ENCODE measurements at regions of chr2 and their contacts with region 1.

Region 1: GRCh38 chr2:11863513-11864328 is 117.3 kb downstream of the LPIN1 start:
- DNase-seq: peak; percentile 85 to 95 (median 94)
- H3K4me3 ChIP-seq: peak overlapping the region in 1 of 4 donors; percentile 19
- H3K27ac ChIP-seq: peak overlapping the region in 3 of 5 donors; percentile 30 to 58 (median 34)
- H3K4me1 ChIP-seq: peaks cover 11 to 14% of the 10 kb centered on the region in 2 donors
- H3K27me3 ChIP-seq: no peaks in the 10 kb centered on the region
- CTCF ChIP-seq: peak; percentile 95 to 99 (median 96)
- POLR2A ChIP-seq: no peak

Region 2: GRCh38 chr2:12176623-12177454 is 313.1 kb after region 1 on chr2:
- intact Hi-C with region 1: loop called in 1 of 2 experiments (anchors 10 kb)
- DNase-seq: peak; percentile 81 to 97 (median 95)
- H3K4me3 ChIP-seq: no peak overlapping the region
- H3K27ac ChIP-seq: peak overlapping the region; percentile 5 to 75 (median 49)
- H3K4me1 ChIP-seq: peaks cover 19 to 45% of the 10 kb centered on the region in 2 donors
- H3K27me3 ChIP-seq: no peaks in the 10 kb centered on the region
- CTCF ChIP-seq: no peak
- POLR2A ChIP-seq: no peak

Measured in adrenal gland (tissue), 19 donors.